Pancreas (tissue), 10 donors: ENCODE measurements at regions of chr3 and their contacts with region 1.

Region 1: DNA sequence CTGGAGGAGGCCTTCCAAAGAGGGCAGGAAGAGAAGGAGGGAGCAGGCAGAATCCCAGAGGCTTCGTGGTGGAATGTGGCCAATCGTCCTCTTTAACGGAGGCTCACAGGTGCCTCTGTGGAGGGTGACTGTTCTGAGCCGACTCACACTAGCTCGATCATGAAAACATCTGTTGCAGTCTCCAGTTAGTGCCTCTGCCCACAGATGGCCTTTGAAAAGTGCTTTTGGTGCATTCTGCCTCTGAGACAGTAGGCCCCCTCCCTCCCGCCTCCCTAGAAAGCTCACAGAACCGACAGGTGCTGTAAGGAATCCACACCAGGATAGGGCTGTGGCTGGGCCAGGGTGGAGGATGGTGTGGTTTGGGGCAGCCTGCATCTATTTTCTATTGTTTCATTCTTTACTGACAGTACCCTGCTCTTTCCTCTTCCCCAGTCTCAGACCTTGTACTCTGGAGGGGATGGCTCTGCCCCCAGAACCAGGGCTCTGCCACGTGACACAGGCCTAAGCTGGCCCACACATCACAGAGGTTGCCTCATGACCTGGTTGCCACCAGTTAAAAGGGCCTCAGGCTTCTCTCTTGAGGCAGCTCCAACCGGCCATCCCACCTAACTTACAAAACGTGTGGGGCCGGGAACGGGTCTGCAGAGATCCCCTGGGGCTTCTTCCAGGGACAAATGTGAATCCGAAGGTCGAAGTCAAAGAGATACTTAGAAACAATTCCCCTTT is 27.2 kb upstream of the PIGZ start:
- DNase-seq: peak in 2 of 6 donors; percentile 18 to 30
- ATAC-seq: no peak
- H3K4me3 ChIP-seq: no peak overlapping the region
- H3K27ac ChIP-seq: no peak overlapping the region
- H3K4me1 ChIP-seq: no peaks in the 10 kb centered on the region
- H3K27me3 ChIP-seq: no peaks in the 10 kb centered on the region
- CTCF ChIP-seq: no peak

Region 2: GRCh38 chr3:196632046-196632751 is 363.6 kb before region 1 on chr3:
- intact Hi-C with region 1: no loop called
- DNase-seq: peak; percentile 64 to 92 (median 76)
- ATAC-seq: peak; percentile 94 to 98 (median 96)
- H3K4me3 ChIP-seq: peak overlapping the region; percentile 41 to 72 (median 54)
- H3K27ac ChIP-seq: peak overlapping the region; percentile 54 to 83 (median 65)
- H3K4me1 ChIP-seq: peaks cover 0 to 2% (median 0%) of the 10 kb centered on the region in 3 donors
- H3K27me3 ChIP-seq: no peaks in the 10 kb centered on the region
- CTCF ChIP-seq: peak in 1 of 4 donors; percentile 14

Region 3: DNA sequence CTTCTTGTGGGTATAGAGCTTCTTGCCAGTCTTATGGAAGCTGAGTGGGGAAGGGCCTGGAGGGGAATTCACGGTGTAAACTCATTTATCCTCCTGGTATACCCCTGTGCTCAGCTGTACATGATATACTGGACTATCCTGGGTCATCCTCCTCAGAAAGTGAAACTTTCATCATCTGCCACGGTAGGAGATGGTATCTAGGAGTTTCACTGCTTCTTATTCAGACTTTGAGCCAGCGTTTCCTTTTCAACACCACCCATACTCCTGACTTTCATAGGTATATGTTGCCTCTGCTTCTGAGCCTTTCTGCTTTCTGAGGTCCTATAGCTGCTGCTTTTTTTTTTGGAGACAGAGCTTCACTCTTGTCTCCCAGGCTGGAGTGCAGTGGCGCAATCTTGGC is 112.4 kb before region 1 on chr3:
- intact Hi-C with region 1: no loop called
- DNase-seq: no peak
- ATAC-seq: no peak
- H3K4me3 ChIP-seq: no peak overlapping the region
- H3K27ac ChIP-seq: no peak overlapping the region
- H3K4me1 ChIP-seq: no peaks in the 10 kb centered on the region
- H3K27me3 ChIP-seq: no peaks in the 10 kb centered on the region
- CTCF ChIP-seq: no peak

Region 4: DNA sequence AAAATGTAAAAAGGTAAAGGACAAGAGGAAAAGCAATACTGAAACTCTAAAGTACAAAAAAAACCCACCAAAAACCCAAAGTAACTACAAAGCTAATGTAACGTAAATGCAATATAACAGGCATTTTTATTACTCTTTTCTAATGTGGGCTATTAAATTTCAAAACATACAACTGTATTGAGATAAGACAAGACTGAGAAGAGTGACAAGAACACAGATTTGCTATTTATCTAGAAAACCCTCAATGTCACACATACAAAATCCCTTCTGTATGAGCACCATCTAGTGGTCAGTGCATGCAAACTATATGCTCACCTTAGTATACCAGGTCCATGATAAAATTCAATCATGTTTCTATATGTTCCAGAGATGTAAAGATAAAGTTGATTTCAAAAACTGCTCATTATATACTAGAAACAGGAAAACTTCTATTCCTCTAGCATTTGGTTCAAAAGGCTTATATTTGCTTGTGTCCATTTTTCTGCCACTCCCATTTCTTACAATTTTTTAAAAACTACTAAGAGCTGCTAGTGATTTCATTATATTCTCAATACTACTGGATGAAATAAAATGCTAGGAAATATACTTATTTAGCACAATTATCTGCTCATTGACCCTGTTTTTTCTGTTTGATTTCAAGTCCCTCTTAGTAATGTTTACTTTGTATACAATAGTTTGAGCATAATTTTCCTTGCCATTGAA is 191.2 kb after region 1 on chr3:
- intact Hi-C with region 1: loop called in 1 of 3 experiments (anchors 10 kb)
- DNase-seq: no peak
- ATAC-seq: peak; percentile 70 to 94 (median 88)
- H3K4me3 ChIP-seq: no peak overlapping the region
- H3K27ac ChIP-seq: no peak overlapping the region
- H3K4me1 ChIP-seq: no peaks in the 10 kb centered on the region
- H3K27me3 ChIP-seq: no peaks in the 10 kb centered on the region
- CTCF ChIP-seq: peak; percentile 63 to 78 (median 68)